Heart left ventricle (tissue), 16 donors: ENCODE measurements at regions of chr2 and their contacts with region 1.

Region 1: GRCh38 chr2:239308661-239309397 is 92.0 kb downstream of the HDAC4 start:
- DNase-seq: peak in 1 of 5 donors; percentile 61
- ATAC-seq: peak; percentile 19 to 52 (median 30)
- H3K4me3 ChIP-seq: peak overlapping the region; percentile 10 to 63 (median 51)
- H3K27ac ChIP-seq: peak overlapping the region; percentile 78 to 91 (median 85)
- H3K4me1 ChIP-seq: peaks cover 6 to 96% (median 71%) of the 10 kb centered on the region in 12 donors
- H3K27me3 ChIP-seq: no peaks in the 10 kb centered on the region
- CTCF ChIP-seq: peak in 5 of 12 donors; percentile 0 to 39 (median 16)
- POLR2A ChIP-seq: no peak

Region 2: GRCh38 chr2:239223310-239224198 is 85.3 kb before region 1 on chr2:
- intact Hi-C with region 1: loop called in 2 of 10 experiments (anchors 5 kb)
- DNase-seq: peak in 2 of 5 donors; percentile 48 to 49
- ATAC-seq: peak in 3 of 4 donors; percentile 23 to 43 (median 32)
- H3K4me3 ChIP-seq: peak overlapping the region in 1 of 12 donors; percentile 12
- H3K27ac ChIP-seq: peak overlapping the region in 11 of 12 donors; percentile 79 to 93 (median 83)
- H3K4me1 ChIP-seq: peaks cover 12 to 87% (median 71%) of the 10 kb centered on the region in 12 donors
- H3K27me3 ChIP-seq: no peaks in the 10 kb centered on the region
- CTCF ChIP-seq: no peak
- POLR2A ChIP-seq: no peak

Region 3: GRCh38 chr2:239239607-239240413 is 69.0 kb before region 1 on chr2:
- intact Hi-C with region 1: loop called in 1 of 10 experiments (anchors 5 kb)
- DNase-seq: peak in 2 of 5 donors; percentile 54 to 69
- ATAC-seq: peak; percentile 55 to 76 (median 71)
- H3K4me3 ChIP-seq: peak overlapping the region in 8 of 12 donors; percentile 4 to 36 (median 19)
- H3K27ac ChIP-seq: peak overlapping the region; percentile 6 to 90 (median 77)
- H3K4me1 ChIP-seq: peaks cover 2 to 72% (median 33%) of the 10 kb centered on the region in 12 donors
- H3K27me3 ChIP-seq: no peaks in the 10 kb centered on the region
- CTCF ChIP-seq: no peak
- POLR2A ChIP-seq: no peak

Region 4: DNA sequence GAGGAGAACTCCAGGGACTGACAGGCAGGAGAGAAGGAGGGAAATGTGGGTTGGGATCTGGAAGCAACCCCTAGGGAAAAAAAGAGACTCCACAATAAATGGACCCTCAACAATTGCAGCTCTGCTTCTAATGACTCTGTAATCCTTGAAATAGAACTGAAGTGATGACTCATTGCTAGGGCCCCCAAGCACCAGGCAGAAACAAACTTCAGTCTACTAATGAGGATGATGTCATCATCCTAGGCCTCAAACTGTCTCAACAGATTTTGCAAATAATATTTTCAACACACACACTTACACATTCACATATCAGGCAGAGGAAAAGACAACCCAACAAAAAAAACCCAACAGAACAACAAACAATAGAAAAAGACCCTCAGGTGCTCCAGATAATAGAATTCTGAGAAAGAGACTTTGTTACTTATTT is 51.3 kb before region 1 on chr2:
- intact Hi-C with region 1: loop called in 1 of 10 experiments (anchors 5 kb)
- DNase-seq: peak in 1 of 5 donors; percentile 14
- ATAC-seq: peak in 2 of 4 donors; percentile 46 to 56
- H3K4me3 ChIP-seq: no peak overlapping the region
- H3K27ac ChIP-seq: peak overlapping the region in 5 of 12 donors; percentile 20 to 88 (median 48)
- H3K4me1 ChIP-seq: peaks cover 0 to 98% (median 28%) of the 10 kb centered on the region in 12 donors
- H3K27me3 ChIP-seq: no peaks in the 10 kb centered on the region
- CTCF ChIP-seq: no peak
- POLR2A ChIP-seq: no peak

Region 5: GRCh38 chr2:240043279-240043989 is 734.6 kb after region 1 on chr2:
- intact Hi-C with region 1: no loop called
- DNase-seq: no peak
- ATAC-seq: no peak
- H3K4me3 ChIP-seq: no peak overlapping the region
- H3K27ac ChIP-seq: no peak overlapping the region
- H3K4me1 ChIP-seq: no peaks in the 10 kb centered on the region
- H3K27me3 ChIP-seq: peaks cover 0 to 57% (median 8%) of the 10 kb centered on the region in 9 donors
- CTCF ChIP-seq: no peak
- POLR2A ChIP-seq: no peak